ENCODE measurements at regions of chr16 and their contacts with region 1.

Region 1: DNA sequence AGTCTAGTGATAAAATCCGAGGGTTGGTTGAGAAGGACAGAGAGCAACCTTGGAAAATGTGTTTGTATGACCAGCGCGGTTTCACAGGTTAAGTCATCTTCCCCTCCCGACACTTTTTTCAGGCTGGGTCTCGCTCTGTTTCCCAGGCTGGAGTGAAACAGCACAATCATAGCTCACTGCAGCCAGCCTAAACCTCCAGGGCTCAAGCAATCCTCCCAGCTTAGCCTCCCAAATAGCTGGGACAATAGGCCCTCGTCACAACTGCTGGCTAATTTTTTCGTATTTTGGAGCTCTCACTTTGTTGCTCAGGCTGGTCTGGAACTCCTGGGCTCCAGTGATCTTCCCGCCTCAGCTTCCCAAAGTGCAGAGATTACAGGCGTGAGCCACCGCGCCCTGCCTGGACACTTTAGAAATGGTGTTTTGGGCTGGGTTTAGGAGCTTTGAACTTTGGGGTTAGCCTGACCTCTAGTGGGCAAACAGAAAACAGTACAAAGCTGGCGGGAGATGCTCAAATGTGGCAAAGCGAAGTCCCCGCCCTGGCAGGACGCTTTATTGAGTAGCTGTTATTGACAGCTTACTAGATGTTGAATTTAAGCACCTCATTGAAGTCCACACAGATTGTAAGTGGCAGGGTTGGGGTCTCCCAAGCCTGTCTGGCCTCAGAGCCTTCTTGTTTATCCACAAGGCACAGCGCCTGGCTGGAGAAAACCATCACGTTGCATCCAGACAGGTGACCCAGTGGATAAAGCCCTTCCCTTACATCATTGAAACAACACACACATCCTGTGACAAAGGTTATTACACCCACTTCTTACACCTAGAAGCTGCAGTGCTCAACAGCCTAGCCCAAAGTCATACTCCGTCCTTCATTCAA is 34.7 kb upstream of the RBBP6 start:
- DNase-seq: peak in 4 of 5 donors; percentile 51 to 61 (median 55)
- H3K4me3 ChIP-seq: no peak overlapping the region
- H3K4me3 Mint-ChIP-seq: no peak overlapping the region
- H3K27ac ChIP-seq: no peak overlapping the region
- H3K27ac Mint-ChIP-seq: no peak overlapping the region
- H3K4me1 ChIP-seq: no peaks in the 10 kb centered on the region
- H3K4me1 Mint-ChIP-seq: peaks cover 0 to 3% (median 0%) of the 10 kb centered on the region in 4 donors
- H3K27me3 ChIP-seq: peaks cover 4% of the 10 kb centered on the region
- H3K27me3 Mint-ChIP-seq: peaks cover 9 to 10% of the 10 kb centered on the region in 2 donors

Region 2: GRCh38 chr16:23182460-23183309 is 1322.0 kb before region 1 on chr16 and contains the start of gene SCNN1G:
- CTCF ChIA-PET with region 1: no interaction called
- POLR2A ChIA-PET with region 1: no interaction called
- intact Hi-C with region 1: loop called (anchors 5 kb)
- DNase-seq: peak; percentile 61 to 77 (median 70)
- H3K4me3 ChIP-seq: no peak within 1 kb of the TSS
- H3K4me3 Mint-ChIP-seq: peak within 1 kb of the TSS; percentile 4 to 83 (median 62)
- H3K27ac ChIP-seq: no peak within 1 kb of the TSS
- H3K27ac Mint-ChIP-seq: peak within 1 kb of the TSS in 1 of 7 donors; percentile 3
- H3K4me1 ChIP-seq: peaks cover 14% of the 10 kb centered on the region
- H3K4me1 Mint-ChIP-seq: peaks cover 5 to 20% (median 8%) of the 10 kb centered on the region in 4 donors
- H3K27me3 ChIP-seq: peaks cover 9% of the 10 kb centered on the region
- H3K27me3 Mint-ChIP-seq: peaks cover 42 to 46% of the 10 kb centered on the region in 2 donors
- total RNA-seq, gene SCNN1G: not detected

Region 3: GRCh38 chr16:23678430-23679273 is 826.1 kb before region 1 on chr16 and contains the start of gene PLK1:
- CTCF ChIA-PET with region 1: interaction called, 3 read pairs
- POLR2A ChIA-PET with region 1: no interaction called
- intact Hi-C with region 1: loop called (anchors 5 kb)
- DNase-seq: peak; percentile 63 to 72 (median 67)
- H3K4me3 ChIP-seq: peak within 1 kb of the TSS; percentile 70 to 81
- H3K4me3 Mint-ChIP-seq: peak within 1 kb of the TSS; percentile 78 to 89 (median 85)
- H3K27ac ChIP-seq: no peak within 1 kb of the TSS
- H3K27ac Mint-ChIP-seq: peak within 1 kb of the TSS in 6 of 7 donors; percentile 46 to 84 (median 66)
- H3K4me1 ChIP-seq: peaks cover 17% of the 10 kb centered on the region
- H3K4me1 Mint-ChIP-seq: peaks cover 8 to 28% (median 20%) of the 10 kb centered on the region in 4 donors
- H3K27me3 ChIP-seq: no peaks in the 10 kb centered on the region
- H3K27me3 Mint-ChIP-seq: no peaks in the 10 kb centered on the region
- total RNA-seq, gene PLK1: 3.0 to 3.5 TPM

Region 4: DNA sequence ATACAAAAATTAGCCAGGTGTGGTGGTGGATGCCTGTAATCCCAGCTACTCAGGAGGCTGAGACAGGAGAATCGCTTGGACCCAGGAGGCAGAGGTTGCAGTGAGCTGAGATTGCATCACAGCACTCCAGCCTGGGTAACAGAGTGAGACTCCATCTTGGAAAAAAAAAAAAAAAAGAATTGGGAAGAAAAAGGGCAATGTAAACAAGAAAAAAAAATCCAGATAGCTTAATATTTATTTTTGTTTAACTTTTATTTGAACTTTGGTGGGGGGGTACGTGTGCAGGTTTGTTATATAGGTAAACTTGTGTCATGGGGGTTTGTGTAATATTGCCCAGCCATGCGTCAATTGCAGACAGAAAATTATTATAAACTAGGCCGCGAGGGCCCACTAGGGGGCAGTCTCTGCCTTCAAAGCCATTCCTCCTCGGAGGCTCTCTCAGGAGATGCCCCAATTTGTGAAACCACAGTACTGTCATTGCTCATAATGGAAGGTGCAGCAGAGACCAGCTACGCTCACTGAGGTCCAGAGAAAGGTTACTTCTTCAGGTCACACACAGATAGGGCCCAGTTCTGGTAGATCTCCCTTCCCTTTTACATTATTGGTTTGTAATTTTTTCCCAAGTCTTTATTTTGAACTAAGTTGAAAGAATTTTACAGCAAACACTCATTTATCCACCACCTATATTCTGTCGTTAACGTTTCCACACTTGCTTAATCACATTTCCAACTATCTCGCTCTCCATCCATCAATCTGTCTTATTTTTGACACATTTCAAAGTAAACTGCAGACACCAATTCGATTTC is 462.7 kb before region 1 on chr16:
- CTCF ChIA-PET with region 1: interaction called, 27 read pairs
- POLR2A ChIA-PET with region 1: no interaction called
- intact Hi-C with region 1: no loop called
- DNase-seq: peak; percentile 68 to 76 (median 73)
- H3K4me3 ChIP-seq: no peak overlapping the region
- H3K4me3 Mint-ChIP-seq: no peak overlapping the region
- H3K27ac ChIP-seq: no peak overlapping the region
- H3K27ac Mint-ChIP-seq: peak overlapping the region in 1 of 7 donors; percentile 24
- H3K4me1 ChIP-seq: no peaks in the 10 kb centered on the region
- H3K4me1 Mint-ChIP-seq: peaks cover 0 to 31% (median 12%) of the 10 kb centered on the region in 4 donors
- H3K27me3 ChIP-seq: no peaks in the 10 kb centered on the region
- H3K27me3 Mint-ChIP-seq: no peaks in the 10 kb centered on the region

Region 5: GRCh38 chr16:24253192-24253591 is 251.5 kb before region 1 on chr16:
- CTCF ChIA-PET with region 1: interaction called, 10 read pairs
- POLR2A ChIA-PET with region 1: no interaction called
- intact Hi-C with region 1: no loop called
- DNase-seq: peak in 4 of 5 donors; percentile 33 to 48 (median 42)
- H3K4me3 ChIP-seq: no peak overlapping the region
- H3K4me3 Mint-ChIP-seq: no peak overlapping the region
- H3K27ac ChIP-seq: no peak overlapping the region
- H3K27ac Mint-ChIP-seq: no peak overlapping the region
- H3K4me1 ChIP-seq: no peaks in the 10 kb centered on the region
- H3K4me1 Mint-ChIP-seq: peaks cover 0 to 7% (median 4%) of the 10 kb centered on the region in 4 donors
- H3K27me3 ChIP-seq: peaks cover 21% of the 10 kb centered on the region
- H3K27me3 Mint-ChIP-seq: peaks cover 38 to 42% of the 10 kb centered on the region in 2 donors

Region 6: DNA sequence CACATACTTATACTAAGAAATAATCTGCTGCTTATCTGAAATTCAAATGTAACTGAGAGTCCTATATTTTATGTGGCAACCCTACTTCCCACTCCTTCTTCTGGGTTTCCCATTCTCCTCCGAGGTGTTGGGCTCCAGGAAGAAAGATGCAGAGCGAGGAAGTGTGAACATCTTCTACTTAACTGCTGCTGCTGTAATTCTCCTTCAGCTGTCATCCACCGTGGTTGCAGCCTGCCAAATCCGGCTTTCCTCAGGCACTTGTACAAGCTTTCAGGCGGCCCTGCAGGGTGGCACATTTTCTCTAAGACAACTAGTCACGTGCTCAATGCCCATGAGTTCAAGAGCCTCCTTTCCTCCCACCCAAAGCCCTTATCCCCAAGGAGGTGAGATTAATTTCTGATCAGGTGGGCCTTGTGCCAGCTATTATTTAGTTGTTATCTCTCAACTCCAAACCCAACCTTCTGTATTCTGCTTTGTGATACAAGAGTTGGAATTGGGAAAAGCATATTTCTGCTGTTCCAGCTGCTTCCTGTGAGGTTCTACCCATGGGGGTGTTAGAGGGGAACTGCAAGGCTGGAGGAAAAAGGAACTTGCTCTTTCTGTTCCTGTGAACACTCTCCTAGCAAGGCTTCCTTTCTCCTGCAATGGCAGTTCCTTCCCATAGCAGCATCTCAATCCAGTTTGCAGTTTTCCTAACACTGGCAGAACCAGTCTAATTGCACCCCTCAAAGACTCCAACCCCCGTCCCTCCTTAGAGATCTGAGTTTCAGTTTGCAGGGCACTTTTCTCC is 33.0 kb before region 1 on chr16:
- CTCF ChIA-PET with region 1: no interaction called
- POLR2A ChIA-PET with region 1: no interaction called
- intact Hi-C with region 1: no loop called
- DNase-seq: no peak
- H3K4me3 ChIP-seq: no peak overlapping the region
- H3K4me3 Mint-ChIP-seq: no peak overlapping the region
- H3K27ac ChIP-seq: no peak overlapping the region
- H3K27ac Mint-ChIP-seq: no peak overlapping the region
- H3K4me1 ChIP-seq: no peaks in the 10 kb centered on the region
- H3K4me1 Mint-ChIP-seq: no peaks in the 10 kb centered on the region
- H3K27me3 ChIP-seq: no peaks in the 10 kb centered on the region
- H3K27me3 Mint-ChIP-seq: peaks cover 10 to 15% of the 10 kb centered on the region in 2 donors

Region 7: DNA sequence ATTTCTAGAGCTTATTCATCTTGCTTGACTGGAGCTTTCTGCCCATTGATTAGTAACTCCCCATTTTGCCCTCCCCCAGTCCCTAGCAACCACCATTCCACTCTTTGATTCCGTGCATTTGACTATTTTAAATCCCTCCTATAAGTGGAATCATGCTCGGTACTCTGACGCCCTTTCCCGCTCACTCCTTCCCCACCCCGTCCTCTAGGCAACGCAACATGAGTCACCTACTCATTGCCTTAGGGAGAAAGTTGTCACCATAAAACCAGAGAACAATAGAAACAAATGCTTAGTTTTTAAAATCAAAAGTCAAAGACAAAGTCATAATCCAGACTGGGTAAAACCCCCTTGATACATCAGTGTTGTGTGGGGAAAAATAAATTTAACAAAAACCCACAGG is 10.8 kb before region 1 on chr16:
- CTCF ChIA-PET with region 1: interaction called, 17 read pairs
- POLR2A ChIA-PET with region 1: no interaction called
- intact Hi-C with region 1: no loop called
- DNase-seq: no peak
- H3K4me3 ChIP-seq: no peak overlapping the region
- H3K4me3 Mint-ChIP-seq: no peak overlapping the region
- H3K27ac ChIP-seq: no peak overlapping the region
- H3K27ac Mint-ChIP-seq: no peak overlapping the region
- H3K4me1 ChIP-seq: no peaks in the 10 kb centered on the region
- H3K4me1 Mint-ChIP-seq: no peaks in the 10 kb centered on the region
- H3K27me3 ChIP-seq: no peaks in the 10 kb centered on the region
- H3K27me3 Mint-ChIP-seq: peaks cover 8 to 12% of the 10 kb centered on the region in 2 donors

Region 8: DNA sequence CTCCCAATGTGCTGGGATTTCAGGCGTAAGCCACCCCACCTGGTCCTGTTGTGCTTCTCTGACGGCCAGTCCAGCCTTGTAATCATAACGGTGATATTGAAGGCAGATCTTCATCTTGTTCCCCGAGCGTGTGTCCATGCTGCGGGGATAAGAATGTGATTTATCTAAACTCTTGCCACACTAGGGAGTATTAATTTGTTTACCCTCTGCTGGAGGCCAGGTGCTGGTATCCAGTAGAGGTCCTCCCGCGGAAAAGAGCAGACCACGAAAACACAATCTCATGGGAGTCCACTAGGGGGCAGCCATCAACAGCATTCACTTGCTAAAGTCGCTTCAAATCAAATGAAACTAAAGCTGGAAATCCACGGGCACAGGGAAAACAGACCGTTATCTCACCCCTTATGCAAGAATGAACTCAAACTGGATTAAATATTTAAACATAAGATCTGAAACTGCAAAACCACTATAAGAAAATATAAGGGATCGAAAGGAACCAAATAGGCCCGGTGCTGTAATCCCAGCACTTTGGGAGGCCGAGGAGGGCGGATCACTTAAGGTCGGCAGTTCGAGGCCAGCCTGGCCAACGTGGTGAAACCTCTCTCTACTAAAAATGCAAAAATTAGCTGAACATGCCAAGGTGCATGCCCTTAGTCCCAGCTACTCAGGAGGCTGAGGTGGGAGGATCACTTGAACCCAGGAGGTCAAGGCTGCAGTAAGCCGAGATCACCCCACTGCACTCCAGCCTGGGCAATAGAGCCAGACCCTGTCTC is 12.4 kb after region 1 on chr16:
- CTCF ChIA-PET with region 1: interaction called, 44 read pairs
- POLR2A ChIA-PET with region 1: no interaction called
- intact Hi-C with region 1: no loop called
- DNase-seq: peak; percentile 62 to 69 (median 67)
- H3K4me3 ChIP-seq: no peak overlapping the region
- H3K4me3 Mint-ChIP-seq: peak overlapping the region in 6 of 8 donors; percentile 3 to 55 (median 46)
- H3K27ac ChIP-seq: no peak overlapping the region
- H3K27ac Mint-ChIP-seq: peak overlapping the region in 3 of 7 donors; percentile 14 to 88 (median 71)
- H3K4me1 ChIP-seq: no peaks in the 10 kb centered on the region
- H3K4me1 Mint-ChIP-seq: peaks cover 4 to 6% (median 5%) of the 10 kb centered on the region in 4 donors
- H3K27me3 ChIP-seq: no peaks in the 10 kb centered on the region
- H3K27me3 Mint-ChIP-seq: peaks cover 2 to 3% of the 10 kb centered on the region in 2 donors

Region 9: DNA sequence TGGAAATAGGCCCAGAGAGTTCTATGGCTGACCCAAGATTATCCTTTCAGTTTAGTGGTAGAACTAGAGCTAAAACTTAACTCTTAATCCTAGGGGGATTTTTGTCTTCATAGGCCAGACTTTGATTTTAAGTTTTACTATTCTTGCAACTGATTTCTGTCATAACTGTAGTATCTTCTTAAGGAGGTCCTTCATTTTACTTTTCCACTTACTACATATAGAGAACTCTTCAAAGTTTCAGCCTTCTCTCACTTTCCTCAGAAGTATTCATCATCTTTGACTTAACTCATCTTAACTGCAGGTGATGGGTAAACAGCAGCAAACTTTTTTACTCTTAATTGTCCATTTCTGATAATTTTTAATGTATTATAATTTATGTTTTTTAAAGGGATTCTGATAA is 58.1 kb after region 1 on chr16:
- CTCF ChIA-PET with region 1: no interaction called
- POLR2A ChIA-PET with region 1: no interaction called
- intact Hi-C with region 1: no loop called
- DNase-seq: no peak
- H3K4me3 ChIP-seq: no peak overlapping the region
- H3K4me3 Mint-ChIP-seq: no peak overlapping the region
- H3K27ac ChIP-seq: no peak overlapping the region
- H3K27ac Mint-ChIP-seq: no peak overlapping the region
- H3K4me1 ChIP-seq: no peaks in the 10 kb centered on the region
- H3K4me1 Mint-ChIP-seq: peaks cover 0 to 5% (median 1%) of the 10 kb centered on the region in 4 donors
- H3K27me3 ChIP-seq: no peaks in the 10 kb centered on the region
- H3K27me3 Mint-ChIP-seq: no peaks in the 10 kb centered on the region

Region 10: GRCh38 chr16:24580665-24581064 is 76.0 kb after region 1 on chr16:
- CTCF ChIA-PET with region 1: no interaction called
- POLR2A ChIA-PET with region 1: no interaction called
- intact Hi-C with region 1: no loop called
- DNase-seq: no peak
- H3K4me3 ChIP-seq: no peak overlapping the region
- H3K4me3 Mint-ChIP-seq: no peak overlapping the region
- H3K27ac ChIP-seq: no peak overlapping the region
- H3K27ac Mint-ChIP-seq: no peak overlapping the region
- H3K4me1 ChIP-seq: no peaks in the 10 kb centered on the region
- H3K4me1 Mint-ChIP-seq: peaks cover 0 to 2% (median 0%) of the 10 kb centered on the region in 4 donors
- H3K27me3 ChIP-seq: no peaks in the 10 kb centered on the region
- H3K27me3 Mint-ChIP-seq: peaks cover 2 to 4% of the 10 kb centered on the region in 2 donors

Region 11: GRCh38 chr16:24609740-24610415 is 105.2 kb after region 1 on chr16:
- CTCF ChIA-PET with region 1: no interaction called
- POLR2A ChIA-PET with region 1: no interaction called
- intact Hi-C with region 1: no loop called
- DNase-seq: no peak
- H3K4me3 ChIP-seq: no peak overlapping the region
- H3K4me3 Mint-ChIP-seq: peak overlapping the region in 4 of 8 donors; percentile 15 to 36 (median 24)
- H3K27ac ChIP-seq: no peak overlapping the region
- H3K27ac Mint-ChIP-seq: peak overlapping the region in 1 of 7 donors; percentile 60
- H3K4me1 ChIP-seq: no peaks in the 10 kb centered on the region
- H3K4me1 Mint-ChIP-seq: peaks cover 0 to 15% (median 7%) of the 10 kb centered on the region in 4 donors
- H3K27me3 ChIP-seq: no peaks in the 10 kb centered on the region
- H3K27me3 Mint-ChIP-seq: peaks cover 43 to 45% of the 10 kb centered on the region in 2 donors

Measured in CD4-positive, alpha-beta memory T cell (primary cell).